ENCODE measurements at regions of chr6 and their contacts with region 1.

Region 1: GRCh38 chr6:129644567-129645015 is 65.4 kb downstream of the ARHGAP18 start:
- DNase-seq: no peak
- ATAC-seq: no peak
- H3K4me3 ChIP-seq: no peak overlapping the region
- H3K27ac ChIP-seq: no peak overlapping the region
- H3K4me1 ChIP-seq: peaks cover 3 to 14% of the 10 kb centered on the region in 2 experiments; a peak in 3 of 5 replicates
- H3K27me3 ChIP-seq: no peaks in the 10 kb centered on the region
- CTCF ChIP-seq: no peak
- EP300 ChIP-seq: no peak
- POLR2A ChIP-seq: no peak
- RAD21 ChIP-seq: no peak

Region 2: DNA sequence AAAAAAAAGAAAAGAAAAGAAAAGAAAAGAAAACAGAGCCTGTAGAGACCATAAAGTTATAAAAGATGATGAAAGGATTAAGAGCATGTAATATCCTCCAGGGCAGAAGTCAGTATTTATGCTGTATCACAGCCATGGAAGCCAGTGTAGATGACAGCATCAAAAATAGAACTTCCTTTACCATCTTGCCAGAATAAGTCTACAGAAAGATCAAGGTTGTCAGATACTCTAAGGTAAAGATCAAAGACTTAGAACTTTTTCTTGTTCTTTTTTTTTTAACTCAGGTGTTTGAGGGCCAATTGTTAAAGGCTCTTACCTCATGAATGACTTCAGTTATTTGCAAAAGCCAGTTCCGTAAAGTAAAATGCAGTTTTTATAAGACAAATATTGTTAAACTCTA is 10.7 kb after region 1 on chr6:
- CTCF ChIA-PET with region 1: no interaction called
- POLR2A ChIA-PET with region 1: interaction called, 10 read pairs
- in situ Hi-C with region 1: no loop called
- intact Hi-C with region 1: no loop called
- DNase-seq: no peak
- ATAC-seq: no peak
- H3K4me3 ChIP-seq: no peak overlapping the region
- H3K27ac ChIP-seq: no peak overlapping the region
- H3K4me1 ChIP-seq: peaks cover 7 to 8% of the 10 kb centered on the region in 2 experiments; a peak in 4 of 5 replicates
- H3K27me3 ChIP-seq: no peaks in the 10 kb centered on the region
- CTCF ChIP-seq: no peak
- EP300 ChIP-seq: no peak
- POLR2A ChIP-seq: no peak
- RAD21 ChIP-seq: no peak

Measured in K562 (cell line).